ENCODE measurements at regions of chr2 and their contacts with region 1.

Region 1: DNA sequence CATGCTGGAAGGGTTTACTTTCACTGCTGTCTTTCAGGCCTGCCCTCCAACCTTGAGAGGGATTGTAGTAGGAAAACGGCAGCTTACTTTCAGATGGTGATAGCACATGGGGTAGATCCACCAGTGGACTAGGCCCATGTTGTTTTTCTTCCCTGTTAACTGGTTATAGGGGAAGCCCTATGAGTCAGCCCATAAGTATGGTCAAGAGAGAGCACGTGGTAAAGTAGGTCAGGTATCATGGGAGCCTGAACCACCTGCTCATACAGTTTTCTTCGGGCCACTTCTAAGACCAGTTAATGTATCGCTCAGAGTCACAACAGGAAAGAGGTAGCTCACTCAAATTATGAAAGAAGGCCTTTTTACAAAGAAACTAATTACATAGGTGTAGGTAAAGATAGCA is 33.0 kb downstream of the PDK1 start:
- DNase-seq: peak; percentile 1
- H3K4me3 Mint-ChIP-seq: no peak overlapping the region
- H3K27ac Mint-ChIP-seq: no peak overlapping the region
- H3K4me1 Mint-ChIP-seq: no peaks in the 10 kb centered on the region
- H3K27me3 Mint-ChIP-seq: no peaks in the 10 kb centered on the region
- CTCF ChIP-seq: no peak

Region 2: DNA sequence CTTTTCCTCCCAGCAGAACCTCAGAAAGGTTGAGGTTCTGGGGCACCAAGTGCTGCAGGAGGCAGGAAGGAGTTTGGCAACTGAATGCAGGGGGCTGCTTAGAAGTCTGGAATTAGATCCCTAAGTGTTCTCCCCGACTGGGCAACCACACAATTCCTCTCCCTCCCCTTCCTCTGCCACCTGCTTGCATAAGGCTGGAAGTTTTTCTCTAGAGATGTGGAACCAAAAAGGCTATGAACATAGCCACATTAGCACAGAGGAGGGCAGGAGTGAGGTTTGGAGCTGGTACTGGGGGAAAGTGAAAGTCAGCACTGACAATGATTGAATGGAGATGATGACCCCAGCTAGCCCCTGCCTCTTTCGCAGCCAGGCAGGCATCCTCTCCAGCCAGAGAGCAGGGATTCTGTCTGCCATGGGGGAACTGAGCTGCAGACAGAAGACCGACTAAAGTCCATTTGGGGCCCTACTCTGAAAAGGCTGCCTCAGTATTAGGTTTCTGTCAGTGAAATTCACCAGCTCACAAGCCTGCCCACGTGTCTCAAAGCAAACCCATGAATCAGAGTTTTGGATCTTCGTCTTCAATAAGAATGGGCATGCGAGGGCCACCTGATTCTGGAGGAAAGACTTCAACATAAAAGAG is 249.4 kb before region 1 on chr2:
- CTCF ChIA-PET with region 1: no interaction called
- POLR2A ChIA-PET with region 1: no interaction called
- intact Hi-C with region 1: no loop called
- DNase-seq: no peak
- H3K4me3 Mint-ChIP-seq: peak overlapping the region; percentile 30
- H3K27ac Mint-ChIP-seq: peak overlapping the region; percentile 88
- H3K4me1 Mint-ChIP-seq: peaks cover 19% of the 10 kb centered on the region
- H3K27me3 Mint-ChIP-seq: no peaks in the 10 kb centered on the region
- CTCF ChIP-seq: no peak

Region 3: DNA sequence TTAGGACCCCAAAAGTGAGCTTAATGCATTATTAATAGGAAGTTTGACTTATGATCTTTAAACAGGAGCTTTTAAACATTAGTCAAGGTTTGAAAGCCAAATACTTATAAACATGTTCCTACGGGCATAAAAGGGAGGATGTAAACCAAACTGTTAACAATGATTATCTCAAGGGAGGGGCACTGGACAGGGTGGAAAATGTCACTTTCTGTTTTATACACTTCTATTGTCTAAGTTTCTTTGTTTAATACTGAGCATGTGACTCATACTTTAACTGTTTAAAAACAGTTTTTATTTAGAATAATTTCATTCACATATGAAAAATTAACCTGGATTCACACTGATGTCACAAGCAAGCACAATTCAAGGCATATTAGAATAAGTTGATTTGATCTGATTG is 179.9 kb before region 1 on chr2:
- CTCF ChIA-PET with region 1: no interaction called
- POLR2A ChIA-PET with region 1: no interaction called
- intact Hi-C with region 1: no loop called
- DNase-seq: no peak
- H3K4me3 Mint-ChIP-seq: peak overlapping the region; percentile 22
- H3K27ac Mint-ChIP-seq: peak overlapping the region; percentile 88
- H3K4me1 Mint-ChIP-seq: peaks cover 37% of the 10 kb centered on the region
- H3K27me3 Mint-ChIP-seq: no peaks in the 10 kb centered on the region
- CTCF ChIP-seq: no peak

Region 4: DNA sequence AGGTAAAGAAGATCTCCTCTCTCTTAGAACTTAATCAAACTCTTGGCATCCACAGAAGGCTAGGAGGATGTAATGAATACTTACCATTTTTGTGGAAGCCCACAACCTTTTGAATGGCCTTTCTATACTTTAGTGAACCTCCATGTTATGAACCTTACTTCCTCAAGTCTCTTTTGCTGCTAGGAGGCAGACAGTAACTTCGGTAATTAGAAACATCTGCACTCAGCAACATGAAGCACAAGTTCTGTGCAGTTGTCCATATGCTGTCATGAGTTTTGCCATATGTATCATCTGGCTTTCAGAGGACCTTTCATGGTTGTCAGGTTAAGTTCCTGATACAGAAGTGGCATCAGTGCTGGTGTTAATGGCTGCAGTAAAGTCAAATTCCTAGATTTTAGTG is 17.4 kb after region 1 on chr2:
- CTCF ChIA-PET with region 1: interaction called, 16 read pairs
- POLR2A ChIA-PET with region 1: no interaction called
- intact Hi-C with region 1: no loop called
- DNase-seq: no peak
- H3K4me3 Mint-ChIP-seq: no peak overlapping the region
- H3K27ac Mint-ChIP-seq: no peak overlapping the region
- H3K4me1 Mint-ChIP-seq: no peaks in the 10 kb centered on the region
- H3K27me3 Mint-ChIP-seq: no peaks in the 10 kb centered on the region
- CTCF ChIP-seq: no peak

Region 5: GRCh38 chr2:172623249-172623965 is 34.5 kb after region 1 on chr2:
- CTCF ChIA-PET with region 1: interaction called, 10 read pairs
- POLR2A ChIA-PET with region 1: no interaction called
- intact Hi-C with region 1: no loop called
- DNase-seq: no peak
- H3K4me3 Mint-ChIP-seq: no peak overlapping the region
- H3K27ac Mint-ChIP-seq: no peak overlapping the region
- H3K4me1 Mint-ChIP-seq: no peaks in the 10 kb centered on the region
- H3K27me3 Mint-ChIP-seq: no peaks in the 10 kb centered on the region
- CTCF ChIP-seq: no peak

Region 6: DNA sequence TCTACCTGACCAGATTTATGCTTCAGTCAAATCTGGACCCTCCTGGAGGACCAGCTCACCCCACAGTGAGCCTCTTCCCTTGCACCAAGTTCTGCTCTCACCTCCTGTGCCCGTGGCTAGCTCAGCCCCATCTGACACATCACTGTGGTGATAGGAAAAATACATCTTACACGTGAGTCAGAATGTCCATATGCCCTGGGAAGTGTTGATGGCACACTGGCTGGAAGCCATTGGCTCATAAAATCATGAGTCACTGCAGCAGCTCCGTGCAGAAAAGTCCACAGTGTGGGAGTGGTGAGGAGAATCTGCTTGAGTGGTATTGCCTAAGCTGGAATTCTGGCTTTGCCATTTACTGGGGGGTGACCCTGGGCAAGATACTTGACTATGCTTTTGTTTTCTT is 104.1 kb after region 1 on chr2:
- CTCF ChIA-PET with region 1: interaction called, 19 read pairs
- POLR2A ChIA-PET with region 1: no interaction called
- intact Hi-C with region 1: no loop called
- DNase-seq: peak; percentile 98
- H3K4me3 Mint-ChIP-seq: no peak overlapping the region
- H3K27ac Mint-ChIP-seq: peak overlapping the region; percentile 79
- H3K4me1 Mint-ChIP-seq: peaks cover 22% of the 10 kb centered on the region
- H3K27me3 Mint-ChIP-seq: no peaks in the 10 kb centered on the region
- CTCF ChIP-seq: no peak

Region 7: GRCh38 chr2:172722481-172722880 is 133.6 kb after region 1 on chr2:
- CTCF ChIA-PET with region 1: interaction called, 10 read pairs
- POLR2A ChIA-PET with region 1: no interaction called
- intact Hi-C with region 1: no loop called
- DNase-seq: peak; percentile 72
- H3K4me3 Mint-ChIP-seq: no peak overlapping the region
- H3K27ac Mint-ChIP-seq: no peak overlapping the region
- H3K4me1 Mint-ChIP-seq: peaks cover 6% of the 10 kb centered on the region
- H3K27me3 Mint-ChIP-seq: no peaks in the 10 kb centered on the region
- CTCF ChIP-seq: no peak

Region 8: DNA sequence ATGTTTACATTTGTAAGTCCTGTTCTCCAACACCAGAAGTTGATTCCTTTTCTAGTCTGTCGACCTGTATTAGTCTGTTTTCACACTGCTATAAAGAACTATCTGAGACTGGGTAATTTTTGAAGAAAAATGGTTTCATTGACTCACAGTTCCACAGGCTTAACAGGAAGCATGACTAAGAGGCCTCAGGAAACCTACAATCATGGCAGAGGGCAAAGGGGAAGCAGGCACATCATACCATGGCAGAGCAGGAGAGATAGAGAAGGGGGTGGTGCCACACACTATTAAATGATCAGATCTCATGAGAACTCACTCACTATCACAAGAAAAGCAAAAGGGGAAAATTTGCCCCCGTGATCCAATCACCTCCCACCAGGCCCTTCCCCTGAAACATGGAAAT is 373.9 kb after region 1 on chr2:
- CTCF ChIA-PET with region 1: no interaction called
- POLR2A ChIA-PET with region 1: no interaction called
- intact Hi-C with region 1: no loop called
- DNase-seq: peak; percentile 69
- H3K4me3 Mint-ChIP-seq: no peak overlapping the region
- H3K27ac Mint-ChIP-seq: no peak overlapping the region
- H3K4me1 Mint-ChIP-seq: peaks cover 10% of the 10 kb centered on the region
- H3K27me3 Mint-ChIP-seq: no peaks in the 10 kb centered on the region
- CTCF ChIP-seq: no peak

Measured in MCF 10A (cell line).